Endothelial cell of umbilical vein (primary cell): ENCODE measurements at regions of chr3 and their contacts with region 1.

Region 1: DNA sequence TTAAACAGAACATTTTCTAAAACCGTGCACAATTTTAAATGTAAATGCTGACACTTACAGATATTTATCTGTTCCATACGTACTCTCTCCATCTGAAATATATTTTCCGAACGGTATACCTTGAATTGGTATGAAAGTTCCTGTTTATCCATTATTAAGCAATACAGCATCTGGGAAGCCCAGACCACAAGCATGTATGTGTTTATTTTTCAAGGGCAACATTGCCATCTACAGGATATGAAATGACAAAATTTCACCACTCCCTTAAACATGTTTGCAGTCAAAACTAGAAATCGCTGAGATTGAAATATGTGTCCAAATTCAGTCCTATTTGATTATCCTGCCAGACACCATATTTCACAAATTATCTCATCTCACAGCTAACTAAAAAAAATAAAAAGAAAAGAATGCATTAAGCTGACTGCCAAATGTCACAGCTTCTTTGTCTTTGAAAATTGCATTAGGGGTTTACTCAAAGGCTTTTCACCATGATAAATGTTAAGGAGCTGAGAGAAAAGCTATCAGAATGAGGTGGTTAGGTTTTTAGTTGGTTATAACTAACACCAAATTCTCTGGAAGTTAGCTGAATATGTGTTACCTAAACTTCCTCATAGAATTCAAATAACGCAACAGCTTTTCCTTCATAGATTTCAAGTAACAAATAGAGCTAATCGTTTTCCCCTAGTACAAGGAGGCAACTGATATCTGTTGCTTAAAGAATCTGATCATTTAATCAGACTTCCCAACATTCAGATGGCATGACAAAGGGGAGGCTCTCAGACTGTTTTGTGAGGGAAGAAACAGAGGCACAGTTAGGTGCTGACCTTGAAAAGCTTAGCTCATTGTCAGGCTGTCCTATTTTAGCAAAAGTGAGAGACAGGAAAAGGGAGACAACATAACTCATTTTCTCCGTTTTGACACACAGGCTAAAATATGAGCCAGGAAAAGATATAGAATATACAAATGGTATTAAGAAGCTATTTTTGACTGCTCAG is 533.1 kb downstream of the TBL1XR1 start:
- DNase-seq: peak; percentile 80
- H3K4me3 ChIP-seq: no peak overlapping the region
- H3K27ac ChIP-seq: peak overlapping the region; percentile 68
- H3K4me1 ChIP-seq: peaks cover 23% of the 10 kb centered on the region
- H3K27me3 ChIP-seq: no peaks in the 10 kb centered on the region
- CTCF ChIP-seq: no peak
- POLR2A ChIP-seq: no peak

Region 2: GRCh38 chr3:175941356-175941755 is 722.8 kb before region 1 on chr3:
- CTCF ChIA-PET with region 1: no interaction called
- POLR2A ChIA-PET with region 1: no interaction called
- dilution Hi-C with region 1: no loop called
- intact Hi-C with region 1: loop called (anchors 5 kb)
- DNase-seq: peak; percentile 11
- H3K4me3 ChIP-seq: no peak overlapping the region
- H3K27ac ChIP-seq: no peak overlapping the region
- H3K4me1 ChIP-seq: no peaks in the 10 kb centered on the region
- H3K27me3 ChIP-seq: no peaks in the 10 kb centered on the region
- CTCF ChIP-seq: peak; percentile 29 to 33
- POLR2A ChIP-seq: no peak

Region 3: DNA sequence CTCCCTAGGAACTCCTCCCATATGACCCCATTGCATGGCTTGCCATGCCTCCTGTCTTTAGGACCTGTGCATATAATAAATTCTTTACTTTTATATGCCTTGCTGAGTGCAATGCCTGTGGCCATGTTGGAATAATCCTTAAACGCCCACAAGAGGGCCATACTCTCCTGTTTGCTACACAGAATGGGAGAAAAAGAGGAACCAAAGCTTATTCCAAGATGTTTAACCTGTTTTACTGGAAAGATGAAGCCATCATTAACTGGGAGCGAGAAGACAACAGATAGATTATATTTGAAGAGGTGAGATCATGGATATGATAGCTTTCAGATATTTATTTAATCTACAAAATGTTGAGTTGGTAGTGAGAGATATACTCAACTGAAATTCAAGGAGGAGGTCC is 707.1 kb before region 1 on chr3:
- CTCF ChIA-PET with region 1: interaction called, 5 read pairs
- POLR2A ChIA-PET with region 1: no interaction called
- dilution Hi-C with region 1: no loop called
- intact Hi-C with region 1: loop called (anchors 1 kb)
- DNase-seq: no peak
- H3K4me3 ChIP-seq: no peak overlapping the region
- H3K27ac ChIP-seq: no peak overlapping the region
- H3K4me1 ChIP-seq: no peaks in the 10 kb centered on the region
- H3K27me3 ChIP-seq: no peaks in the 10 kb centered on the region
- CTCF ChIP-seq: no peak
- POLR2A ChIP-seq: no peak

Region 4: GRCh38 chr3:176430244-176431037 is 233.7 kb before region 1 on chr3:
- CTCF ChIA-PET with region 1: interaction called, 27 read pairs
- POLR2A ChIA-PET with region 1: no interaction called
- dilution Hi-C with region 1: no loop called
- intact Hi-C with region 1: loop called (anchors 2 kb)
- DNase-seq: peak; percentile 40
- H3K4me3 ChIP-seq: no peak overlapping the region
- H3K27ac ChIP-seq: no peak overlapping the region
- H3K4me1 ChIP-seq: no peaks in the 10 kb centered on the region
- H3K27me3 ChIP-seq: peaks cover 0 to 3% of the 10 kb centered on the region in 2 experiments
- CTCF ChIP-seq: peak; percentile 16 to 45
- POLR2A ChIP-seq: no peak

Region 5: GRCh38 chr3:176514297-176514696 is 149.8 kb before region 1 on chr3:
- CTCF ChIA-PET with region 1: interaction called, 36 read pairs
- POLR2A ChIA-PET with region 1: no interaction called
- dilution Hi-C with region 1: no loop called
- intact Hi-C with region 1: loop called (anchors 1 kb)
- DNase-seq: peak; percentile 73
- H3K4me3 ChIP-seq: no peak overlapping the region
- H3K27ac ChIP-seq: no peak overlapping the region
- H3K4me1 ChIP-seq: no peaks in the 10 kb centered on the region
- H3K27me3 ChIP-seq: no peaks in the 10 kb centered on the region
- CTCF ChIP-seq: peak; percentile 34 to 41
- POLR2A ChIP-seq: no peak

Region 6: DNA sequence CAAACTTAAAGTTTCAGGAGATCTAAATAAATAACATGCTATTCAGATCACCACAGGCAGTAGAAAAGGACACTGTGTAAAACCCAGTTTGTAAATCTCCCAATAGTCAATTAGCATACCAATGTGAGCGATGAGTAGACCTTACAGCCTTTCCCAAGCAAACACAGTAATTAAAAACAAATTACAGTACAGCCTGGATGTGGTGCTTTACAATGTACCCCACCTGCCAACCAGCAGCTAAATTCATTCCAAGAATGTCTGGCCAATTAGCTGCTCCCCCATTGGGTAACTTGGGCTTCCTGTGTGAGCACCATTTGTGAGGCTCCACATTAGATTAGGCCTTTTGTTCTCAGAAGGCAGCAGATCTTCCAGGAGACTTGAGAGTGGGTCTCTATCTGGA is 101.8 kb before region 1 on chr3:
- CTCF ChIA-PET with region 1: no interaction called
- POLR2A ChIA-PET with region 1: no interaction called
- dilution Hi-C with region 1: no loop called
- intact Hi-C with region 1: no loop called
- DNase-seq: no peak
- H3K4me3 ChIP-seq: no peak overlapping the region
- H3K27ac ChIP-seq: no peak overlapping the region
- H3K4me1 ChIP-seq: no peaks in the 10 kb centered on the region
- H3K27me3 ChIP-seq: no peaks in the 10 kb centered on the region
- CTCF ChIP-seq: no peak
- POLR2A ChIP-seq: no peak

Region 7: GRCh38 chr3:176650478-176650877 is 13.7 kb before region 1 on chr3:
- CTCF ChIA-PET with region 1: interaction called, 24 read pairs
- POLR2A ChIA-PET with region 1: no interaction called
- dilution Hi-C with region 1: no loop called
- intact Hi-C with region 1: no loop called
- DNase-seq: no peak
- H3K4me3 ChIP-seq: no peak overlapping the region
- H3K27ac ChIP-seq: no peak overlapping the region
- H3K4me1 ChIP-seq: no peaks in the 10 kb centered on the region
- H3K27me3 ChIP-seq: no peaks in the 10 kb centered on the region
- CTCF ChIP-seq: no peak
- POLR2A ChIP-seq: no peak

Region 8: DNA sequence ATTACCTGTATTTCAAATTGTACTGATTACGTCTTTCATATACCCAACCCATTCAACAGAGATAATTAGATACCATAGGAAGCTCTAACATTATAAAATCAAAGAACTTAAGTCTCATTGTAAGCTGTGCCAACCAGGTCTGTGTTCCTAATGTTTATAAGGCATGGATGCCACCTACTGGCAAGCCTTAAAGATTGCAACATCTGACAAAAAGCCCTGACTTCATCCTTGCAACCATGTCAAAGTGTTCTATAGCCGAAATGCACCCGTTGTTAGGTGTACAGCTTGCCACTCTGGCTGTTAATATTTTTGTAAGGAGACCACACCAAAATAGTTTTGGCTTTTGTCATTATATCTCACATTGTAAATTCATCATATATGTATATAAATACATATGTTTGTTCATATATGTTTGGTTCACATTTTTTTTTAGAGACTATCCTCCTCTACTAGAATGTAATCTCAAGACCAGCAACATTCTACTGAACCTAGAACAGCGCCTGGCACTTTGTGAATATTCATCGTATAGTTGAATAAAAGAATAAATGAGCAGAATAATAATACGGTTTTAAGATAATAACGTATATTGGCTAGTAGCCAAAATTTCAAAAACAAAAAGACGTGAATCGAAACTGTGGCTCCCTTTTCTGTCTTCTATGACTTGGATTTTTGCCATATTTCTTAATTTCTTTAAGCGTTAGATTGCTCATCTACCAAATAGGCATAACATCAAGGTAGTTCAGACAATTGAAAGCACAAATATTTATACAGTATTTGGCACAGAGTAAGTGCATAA is 275.1 kb after region 1 on chr3:
- CTCF ChIA-PET with region 1: interaction called, 21 read pairs
- POLR2A ChIA-PET with region 1: no interaction called
- dilution Hi-C with region 1: no loop called
- intact Hi-C with region 1: loop called (anchors 1 kb)
- DNase-seq: peak; percentile 80
- H3K4me3 ChIP-seq: peak overlapping the region in 1 of 3 experiments; percentile 21
- H3K27ac ChIP-seq: no peak overlapping the region
- H3K4me1 ChIP-seq: no peaks in the 10 kb centered on the region
- H3K27me3 ChIP-seq: no peaks in the 10 kb centered on the region
- CTCF ChIP-seq: peak; percentile 71 to 72
- POLR2A ChIP-seq: no peak